Caco-2 (cell line): ENCODE measurements at regions of chr14 and their contacts with region 1.

Region 1: DNA sequence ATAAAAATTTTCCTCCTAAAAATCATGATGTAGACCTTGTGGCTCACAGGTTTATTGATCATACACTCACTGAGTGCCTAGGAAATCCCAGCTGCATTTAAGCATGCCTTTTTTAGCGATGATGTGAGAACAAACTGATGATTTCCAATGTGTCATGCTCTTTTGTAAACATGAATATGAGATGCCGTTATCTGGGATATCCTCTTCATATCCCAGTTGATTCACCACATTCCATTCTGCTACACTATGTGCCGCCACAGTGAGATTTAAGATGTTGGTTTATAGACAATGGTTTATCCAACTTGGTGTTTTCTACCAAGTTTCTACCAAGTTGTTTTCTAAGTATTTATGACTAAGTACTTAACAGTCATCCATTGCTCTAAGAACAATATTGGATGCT is 5.2 kb downstream of the OR4E1 start:
- DNase-seq: no peak
- H3K4me3 ChIP-seq: no peak overlapping the region
- H3K4me3 Mint-ChIP-seq: no peak overlapping the region
- H3K27ac Mint-ChIP-seq: no peak overlapping the region
- H3K4me1 ChIP-seq: peaks cover 16% of the 10 kb centered on the region
- H3K4me1 Mint-ChIP-seq: peaks cover 17% of the 10 kb centered on the region
- H3K27me3 ChIP-seq: no peaks in the 10 kb centered on the region
- H3K27me3 Mint-ChIP-seq: no peaks in the 10 kb centered on the region
- CTCF ChIP-seq: no peak

Region 2: DNA sequence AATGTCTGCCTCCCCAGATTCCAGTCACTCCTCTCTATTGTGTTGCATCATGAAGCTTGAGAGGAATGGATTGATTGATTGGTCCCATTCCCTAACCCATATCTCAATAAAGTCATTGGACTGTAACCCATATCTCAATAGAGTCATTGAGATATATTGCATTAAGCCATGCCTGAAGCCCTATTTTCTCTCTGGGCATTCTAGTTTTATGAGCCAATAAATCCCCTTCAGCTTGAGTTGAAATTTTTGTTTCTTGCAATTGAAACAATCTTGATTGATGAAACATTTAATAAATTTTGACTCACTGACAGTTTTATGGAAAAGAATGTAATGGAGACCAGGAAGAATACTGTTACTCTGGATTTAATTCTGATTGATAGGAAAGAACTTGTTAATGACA is 26.0 kb after region 1 on chr14:
- CTCF ChIA-PET with region 1: no interaction called
- POLR2A ChIA-PET with region 1: no interaction called
- intact Hi-C with region 1: loop called (anchors 2 kb)
- DNase-seq: no peak
- H3K4me3 ChIP-seq: no peak overlapping the region
- H3K4me3 Mint-ChIP-seq: no peak overlapping the region
- H3K27ac Mint-ChIP-seq: no peak overlapping the region
- H3K4me1 ChIP-seq: peaks cover 7% of the 10 kb centered on the region; the same call in 1 of the 2 replicates
- H3K4me1 Mint-ChIP-seq: peaks cover 5% of the 10 kb centered on the region
- H3K27me3 ChIP-seq: no peaks in the 10 kb centered on the region
- H3K27me3 Mint-ChIP-seq: no peaks in the 10 kb centered on the region
- CTCF ChIP-seq: no peak